ENCODE measurements at regions of chr7 and their contacts with region 1.

Region 1: GRCh38 chr7:47893247-47893646 is 55.0 kb downstream of the PKD1L1 start:
- DNase-seq: peak; percentile 19 to 84
- H3K4me3 ChIP-seq: no peak overlapping the region
- H3K27ac ChIP-seq: no peak overlapping the region
- H3K4me1 ChIP-seq: peaks cover 2 to 11% (median 8%) of the 10 kb centered on the region in 4 experiments; a peak in 4 of 7 replicates
- H3K27me3 ChIP-seq: peaks cover 0 to 9% (median 1%) of the 10 kb centered on the region in 4 experiments; a peak in 3 of 7 replicates
- CTCF ChIP-seq: peak; percentile 70 to 87 (median 81)
- EP300 ChIP-seq: no peak
- POLR2A ChIP-seq: no peak
- RAD21 ChIP-seq: peak; percentile 59 to 72

Region 2: DNA sequence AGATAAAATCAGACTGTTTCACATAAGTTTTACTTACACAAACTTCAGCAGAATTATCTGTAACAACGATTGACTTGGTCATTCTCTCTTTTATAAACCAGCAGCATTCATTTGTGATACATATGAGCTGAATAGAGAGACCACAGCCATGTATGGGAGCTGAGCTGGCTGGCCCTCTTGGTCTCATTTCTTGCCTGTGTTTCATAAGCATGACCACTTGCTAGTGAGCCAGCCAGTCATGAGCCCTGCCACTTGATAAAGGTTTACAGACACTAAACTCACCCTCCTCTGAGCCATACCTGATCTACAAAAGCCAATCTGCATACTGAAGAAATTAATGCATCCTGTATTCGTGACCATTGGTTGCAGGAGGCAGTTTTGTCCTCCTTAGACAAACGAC is 27.1 kb before region 1 on chr7:
- CTCF ChIA-PET with region 1: no interaction called
- POLR2A ChIA-PET with region 1: no interaction called
- DNase-seq: no peak
- H3K4me3 ChIP-seq: no peak overlapping the region
- H3K27ac ChIP-seq: no peak overlapping the region
- H3K4me1 ChIP-seq: no peaks in the 10 kb centered on the region
- H3K27me3 ChIP-seq: no peaks in the 10 kb centered on the region
- CTCF ChIP-seq: no peak
- EP300 ChIP-seq: no peak
- POLR2A ChIP-seq: no peak
- RAD21 ChIP-seq: no peak

Region 3: GRCh38 chr7:47875998-47876744 is 17.1 kb before region 1 on chr7:
- CTCF ChIA-PET with region 1: no interaction called
- POLR2A ChIA-PET with region 1: no interaction called
- DNase-seq: peak in 1 of 2 experiments; percentile 26
- H3K4me3 ChIP-seq: no peak overlapping the region
- H3K27ac ChIP-seq: no peak overlapping the region
- H3K4me1 ChIP-seq: no peaks in the 10 kb centered on the region; a peak in 2 of 7 replicates
- H3K27me3 ChIP-seq: no peaks in the 10 kb centered on the region
- CTCF ChIP-seq: no peak
- EP300 ChIP-seq: no peak
- POLR2A ChIP-seq: no peak
- RAD21 ChIP-seq: no peak

Region 4: GRCh38 chr7:47905096-47905920 is 12.1 kb after region 1 on chr7:
- CTCF ChIA-PET with region 1: interaction called, 24 read pairs
- POLR2A ChIA-PET with region 1: interaction called, 3 read pairs
- DNase-seq: no peak
- H3K4me3 ChIP-seq: no peak overlapping the region
- H3K27ac ChIP-seq: no peak overlapping the region
- H3K4me1 ChIP-seq: peaks cover 0 to 9% (median 4%) of the 10 kb centered on the region in 4 experiments; a peak in 6 of 7 replicates
- H3K27me3 ChIP-seq: no peaks in the 10 kb centered on the region
- CTCF ChIP-seq: no peak
- EP300 ChIP-seq: no peak
- POLR2A ChIP-seq: no peak
- RAD21 ChIP-seq: no peak

Measured in H1 (cell line).